ENCODE measurements at regions of chr16 and their contacts with region 1.

Region 1: GRCh38 chr16:12535535-12536411 is 267.9 kb downstream of the CPPED1 start:
- DNase-seq: peak; percentile 63
- H3K4me3 Mint-ChIP-seq: peak overlapping the region; percentile 57
- H3K27ac Mint-ChIP-seq: peak overlapping the region; percentile 94
- H3K4me1 Mint-ChIP-seq: peaks cover 98% of the 10 kb centered on the region
- H3K27me3 Mint-ChIP-seq: no peaks in the 10 kb centered on the region

Region 2: GRCh38 chr16:11094072-11094856 is 1441.5 kb before region 1 on chr16:
- intact Hi-C with region 1: loop called (anchors 5 kb)
- DNase-seq: peak; percentile 56
- H3K4me3 Mint-ChIP-seq: peak overlapping the region; percentile 68
- H3K27ac Mint-ChIP-seq: peak overlapping the region; percentile 100
- H3K4me1 Mint-ChIP-seq: peaks cover 70% of the 10 kb centered on the region
- H3K27me3 Mint-ChIP-seq: no peaks in the 10 kb centered on the region

Region 3: DNA sequence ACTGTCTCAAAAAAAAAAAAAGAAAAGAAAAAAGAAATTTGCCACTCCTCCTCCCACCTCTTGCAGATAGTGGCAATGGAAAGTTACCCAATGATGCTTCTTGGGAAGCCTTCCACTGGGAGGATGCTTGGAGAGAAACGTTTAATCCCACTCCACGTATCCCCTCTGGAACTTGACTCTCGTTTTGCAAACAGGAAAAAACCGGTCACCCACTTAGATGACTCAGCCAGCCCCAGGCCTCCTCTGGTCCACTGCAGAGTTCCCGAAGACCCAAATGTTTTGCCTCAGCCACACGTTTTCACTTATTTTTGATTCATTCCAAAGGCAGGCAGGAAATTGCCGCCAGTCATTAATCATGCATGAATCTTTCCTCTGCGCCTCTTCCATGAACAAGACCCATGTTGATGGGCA is 580.1 kb before region 1 on chr16:
- intact Hi-C with region 1: no loop called
- DNase-seq: no peak
- H3K4me3 Mint-ChIP-seq: no peak overlapping the region
- H3K27ac Mint-ChIP-seq: no peak overlapping the region
- H3K4me1 Mint-ChIP-seq: no peaks in the 10 kb centered on the region
- H3K27me3 Mint-ChIP-seq: no peaks in the 10 kb centered on the region

Region 4: GRCh38 chr16:11977376-11978041 is 558.3 kb before region 1 on chr16:
- intact Hi-C with region 1: loop called (anchors 5 kb)
- DNase-seq: no peak
- H3K4me3 Mint-ChIP-seq: peak overlapping the region; percentile 96
- H3K27ac Mint-ChIP-seq: peak overlapping the region; percentile 84
- H3K4me1 Mint-ChIP-seq: peaks cover 30% of the 10 kb centered on the region
- H3K27me3 Mint-ChIP-seq: peaks cover 2% of the 10 kb centered on the region

Region 5: DNA sequence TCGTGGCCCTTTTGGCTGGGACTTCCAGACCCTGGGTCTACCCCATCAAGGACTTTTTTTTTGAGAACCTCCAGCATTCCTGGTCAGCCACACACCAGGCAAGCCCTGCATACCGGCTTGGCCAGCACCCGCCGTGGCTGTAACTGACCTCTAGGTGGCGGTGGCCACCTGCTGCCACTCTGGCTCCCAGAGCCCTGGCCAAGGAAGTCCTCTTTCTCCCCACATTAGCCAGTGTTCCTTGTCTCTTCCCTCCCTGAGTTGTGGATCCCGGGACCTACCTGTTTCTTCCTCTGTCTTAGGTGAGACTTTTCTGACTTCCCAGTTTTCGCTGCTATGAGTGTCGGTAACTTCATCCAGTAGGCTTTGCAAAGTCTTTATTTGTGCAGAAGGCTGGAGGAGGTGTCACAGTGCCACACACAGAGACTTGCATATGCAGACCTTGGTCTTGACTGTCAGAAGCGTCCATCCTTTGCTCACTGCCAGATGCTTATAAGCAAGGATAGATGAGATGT is 80.4 kb before region 1 on chr16:
- intact Hi-C with region 1: loop called (anchors 2 kb)
- DNase-seq: peak; percentile 18
- H3K4me3 Mint-ChIP-seq: no peak overlapping the region
- H3K27ac Mint-ChIP-seq: no peak overlapping the region
- H3K4me1 Mint-ChIP-seq: peaks cover 44% of the 10 kb centered on the region
- H3K27me3 Mint-ChIP-seq: no peaks in the 10 kb centered on the region

Region 6: GRCh38 chr16:12573730-12574383 is 38.1 kb after region 1 on chr16:
- intact Hi-C with region 1: loop called (anchors 2 kb)
- DNase-seq: peak; percentile 36
- H3K4me3 Mint-ChIP-seq: no peak overlapping the region
- H3K27ac Mint-ChIP-seq: no peak overlapping the region
- H3K4me1 Mint-ChIP-seq: peaks cover 27% of the 10 kb centered on the region
- H3K27me3 Mint-ChIP-seq: no peaks in the 10 kb centered on the region

Region 7: DNA sequence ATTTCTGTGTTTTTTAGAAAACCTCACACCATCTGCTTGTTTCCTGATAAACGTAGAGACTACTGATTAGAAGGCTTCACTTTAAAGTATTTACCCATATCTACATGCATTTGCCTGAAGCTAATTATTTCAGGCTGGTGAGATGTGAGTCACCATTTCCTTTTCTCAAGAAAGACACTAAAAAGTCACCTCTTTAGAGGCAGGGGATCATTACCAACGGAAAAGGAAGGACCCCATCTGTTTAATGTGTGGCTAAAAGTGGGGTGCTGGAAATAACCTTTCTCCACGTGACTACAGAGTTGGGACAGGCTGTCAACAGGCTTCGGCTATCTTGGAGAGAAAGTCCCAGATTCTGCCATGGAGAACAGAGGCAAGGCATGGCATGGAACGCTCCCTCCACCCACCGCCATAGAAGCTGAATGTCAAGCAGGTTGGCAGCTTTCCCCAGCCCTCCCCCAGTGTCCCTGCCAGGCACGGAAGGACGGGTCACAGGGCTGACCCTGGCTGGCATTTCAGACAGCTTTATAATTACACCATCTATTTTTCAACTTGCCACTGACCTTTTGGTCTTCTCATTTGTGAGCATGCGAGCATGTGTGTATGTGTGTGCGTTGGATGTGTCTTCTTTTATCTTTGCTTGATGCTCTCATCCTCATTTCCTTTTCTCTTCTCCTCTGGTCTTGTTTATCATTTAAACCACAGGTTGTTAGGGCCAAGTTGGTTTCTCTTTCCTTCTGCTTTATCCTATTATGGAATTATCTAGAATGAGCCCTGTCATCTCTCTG is 110.9 kb after region 1 on chr16:
- intact Hi-C with region 1: loop called (anchors 1 kb)
- DNase-seq: peak; percentile 26
- H3K4me3 Mint-ChIP-seq: peak overlapping the region; percentile 38
- H3K27ac Mint-ChIP-seq: peak overlapping the region; percentile 94
- H3K4me1 Mint-ChIP-seq: peaks cover 26% of the 10 kb centered on the region
- H3K27me3 Mint-ChIP-seq: no peaks in the 10 kb centered on the region

Region 8: GRCh38 chr16:12803203-12804097 is 267.7 kb after region 1 on chr16 and contains the start of gene CPPED1:
- intact Hi-C with region 1: loop called (anchors 1 kb)
- DNase-seq: peak; percentile 89
- H3K4me3 Mint-ChIP-seq: peak within 1 kb of the TSS; percentile 93
- H3K27ac Mint-ChIP-seq: peak within 1 kb of the TSS; percentile 91
- H3K4me1 Mint-ChIP-seq: peaks cover 26% of the 10 kb centered on the region
- H3K27me3 Mint-ChIP-seq: no peaks in the 10 kb centered on the region
- total RNA-seq, gene CPPED1: 5.0 and 5.4 TPM in 2 replicates

Measured in activated T-helper 1 cell treated with anti-CD3 and anti-CD28 coated beads, Interleukin-12 subunit alpha, Interleukin-12 subunit beta, Interleukin-2, Interleukin-4 antibody, amounts not matched to agents 30 ng/mL and 10 ng/mL and 1 ng/mL, durations not matched to agents 14 hours and 24 hours and 36 hours (primary cell).